ENCODE measurements at regions of chr14 and their contacts with region 1.

Region 1: DNA sequence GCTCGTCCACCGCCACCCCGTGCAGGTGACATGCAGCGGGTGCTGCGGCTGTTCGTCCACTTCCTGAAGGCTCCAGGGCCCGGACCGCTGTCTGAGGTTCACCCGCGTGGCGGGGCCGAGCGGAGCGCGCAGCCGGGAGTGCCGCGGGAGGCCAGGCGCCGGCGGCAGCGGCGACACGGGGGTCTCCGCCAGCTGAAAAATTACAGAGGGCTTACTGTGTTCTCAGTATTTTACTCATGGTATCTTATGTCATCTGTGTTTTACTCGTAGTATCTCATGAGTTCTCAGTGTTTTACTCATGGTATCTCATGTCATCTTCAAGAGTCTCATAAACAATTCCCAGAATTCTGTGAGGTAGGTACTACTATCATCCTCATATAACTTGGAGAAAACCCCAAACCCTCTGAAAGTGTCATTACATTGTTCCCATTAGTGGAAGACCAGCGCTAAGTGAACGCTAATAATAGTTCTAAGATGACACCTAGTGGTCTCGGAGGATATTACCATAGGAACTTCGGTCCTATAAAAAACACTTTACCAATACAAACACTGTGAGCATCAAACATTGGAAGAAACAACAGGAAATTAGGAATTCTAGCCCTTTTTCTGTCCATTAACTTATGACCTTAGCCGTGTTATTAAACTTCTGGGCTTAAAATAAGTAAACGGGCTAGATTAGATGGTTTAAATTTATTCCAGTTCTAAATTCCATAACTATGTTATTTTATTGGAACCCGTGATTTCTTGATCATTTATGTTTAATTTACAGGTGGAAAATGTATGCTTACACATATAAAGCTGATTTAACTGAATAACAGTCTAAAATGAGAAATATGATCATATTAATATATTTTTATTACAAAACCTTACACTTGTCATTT is 32.4 kb downstream of the AK7 start:
- DNase-seq: peak; percentile 29
- ATAC-seq: peak; percentile 88 to 90

Region 2: DNA sequence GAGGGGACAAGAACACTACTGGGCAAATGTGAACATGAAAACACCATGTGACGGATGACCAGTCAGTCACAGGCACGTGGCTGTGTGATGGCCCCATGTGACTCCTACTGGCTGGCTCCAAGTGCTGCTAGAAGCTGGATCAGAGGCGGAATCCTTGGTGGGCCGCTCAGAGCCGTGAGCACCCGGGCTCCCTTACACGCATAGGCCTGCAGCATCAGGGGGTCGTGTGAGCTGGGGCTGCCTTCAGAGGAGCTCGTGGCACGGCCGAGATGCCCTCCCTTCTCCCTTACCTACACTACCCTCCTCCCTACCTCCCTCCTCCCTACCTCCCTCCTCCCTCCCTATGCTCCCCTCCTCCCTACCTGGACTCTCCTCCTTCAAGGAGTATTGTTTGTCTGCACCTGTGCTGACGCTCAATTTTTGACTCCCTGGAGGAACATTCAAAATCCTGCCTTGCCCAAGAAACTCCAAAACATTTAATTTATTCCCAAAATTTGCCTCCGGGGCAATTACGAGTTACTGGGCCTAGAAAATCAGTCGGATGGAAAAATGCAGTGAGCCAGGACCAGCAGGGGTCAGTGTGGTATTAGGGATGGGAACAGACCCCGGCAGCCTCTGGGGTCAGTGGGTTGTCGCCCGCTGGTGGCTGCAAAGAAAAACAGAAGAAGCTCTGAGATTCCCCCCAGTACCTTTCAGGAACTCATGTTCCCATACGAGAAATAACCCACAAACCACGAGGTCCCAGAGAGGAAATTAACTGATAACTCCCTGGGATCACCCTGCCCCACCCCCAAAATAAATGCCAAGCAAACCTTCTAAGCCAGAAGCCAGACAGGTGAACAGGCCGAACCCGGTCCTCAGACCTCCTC is 324.0 kb before region 1 on chr14:
- intact Hi-C with region 1: loop called (anchors 10 kb)
- DNase-seq: peak; percentile 77
- ATAC-seq: peak; percentile 63 to 65

Region 3: DNA sequence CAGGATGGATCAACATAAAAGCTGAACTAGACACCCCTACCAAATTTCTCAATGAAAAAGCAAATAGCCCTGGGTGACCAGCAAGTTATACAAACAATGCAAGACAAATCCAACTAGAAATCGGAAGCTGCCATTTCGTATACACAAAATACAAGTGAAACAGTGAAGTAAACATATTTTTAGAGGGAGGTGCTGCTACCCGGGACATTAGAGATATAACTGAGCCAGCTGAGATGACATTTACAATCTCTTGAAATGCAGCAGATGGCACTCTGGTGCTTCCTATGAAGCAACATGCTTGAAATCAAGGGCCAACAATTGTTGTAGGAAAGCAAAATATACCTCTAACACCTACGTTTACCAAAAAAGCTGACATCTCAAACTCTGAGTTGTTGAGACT is 142.9 kb before region 1 on chr14:
- intact Hi-C with region 1: loop called (anchors 5 to 10 kb)
- DNase-seq: no peak
- ATAC-seq: no peak

Region 4: DNA sequence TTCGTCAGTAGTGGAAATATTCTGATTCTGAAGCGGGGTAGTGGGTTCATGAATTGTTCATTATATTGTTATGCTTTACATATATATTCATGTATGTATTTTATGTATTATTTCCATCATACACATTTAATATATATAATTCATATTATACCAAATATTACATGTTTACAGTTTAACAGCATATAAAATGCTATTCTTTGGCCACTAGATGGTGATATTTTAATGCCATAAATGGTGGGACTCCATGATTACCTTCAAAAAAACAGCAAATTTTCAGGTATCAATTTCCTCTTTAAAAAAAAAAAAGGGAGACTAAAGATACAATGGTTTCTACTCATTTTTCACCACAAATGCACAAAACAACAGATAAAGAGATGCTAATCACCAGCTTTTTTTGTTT is 127.3 kb before region 1 on chr14:
- intact Hi-C with region 1: loop called in 1 of 2 experiments (anchors 5 kb)
- DNase-seq: no peak
- ATAC-seq: no peak

Region 5: GRCh38 chr14:96486705-96487104 is 62.4 kb after region 1 on chr14:
- intact Hi-C with region 1: no loop called
- DNase-seq: no peak
- ATAC-seq: no peak

Measured in left cardiac atrium (tissue), 4 donors.